Dendritic cell treated with granulocyte-macrophage colony-stimulating factor and Interleukin-4, amounts not matched to agents 40 ng/mL and 50 ng/mL, for 4 days (primary cell): ENCODE measurements at regions of chr3 and their contacts with region 1.

Region 1: GRCh38 chr3:39279745-39280517 is at the start of gene CX3CR1:
- H3K4me3 Mint-ChIP-seq: no peak within 1 kb of the TSS
- H3K27ac Mint-ChIP-seq: peak within 1 kb of the TSS; percentile 66
- H3K4me1 Mint-ChIP-seq: peaks cover 77% of the 10 kb centered on the region
- H3K27me3 Mint-ChIP-seq: no peaks in the 10 kb centered on the region

Region 2: GRCh38 chr3:39249453-39250115 is 30.3 kb before region 1 on chr3:
- intact Hi-C with region 1: loop called (anchors 5 kb)
- H3K4me3 Mint-ChIP-seq: peak overlapping the region; percentile 46
- H3K27ac Mint-ChIP-seq: peak overlapping the region; percentile 79
- H3K4me1 Mint-ChIP-seq: peaks cover 66% of the 10 kb centered on the region
- H3K27me3 Mint-ChIP-seq: peaks cover 25% of the 10 kb centered on the region